MCF 10A (cell line): ENCODE measurements at regions of chr6 and their contacts with region 1.

Region 1: DNA sequence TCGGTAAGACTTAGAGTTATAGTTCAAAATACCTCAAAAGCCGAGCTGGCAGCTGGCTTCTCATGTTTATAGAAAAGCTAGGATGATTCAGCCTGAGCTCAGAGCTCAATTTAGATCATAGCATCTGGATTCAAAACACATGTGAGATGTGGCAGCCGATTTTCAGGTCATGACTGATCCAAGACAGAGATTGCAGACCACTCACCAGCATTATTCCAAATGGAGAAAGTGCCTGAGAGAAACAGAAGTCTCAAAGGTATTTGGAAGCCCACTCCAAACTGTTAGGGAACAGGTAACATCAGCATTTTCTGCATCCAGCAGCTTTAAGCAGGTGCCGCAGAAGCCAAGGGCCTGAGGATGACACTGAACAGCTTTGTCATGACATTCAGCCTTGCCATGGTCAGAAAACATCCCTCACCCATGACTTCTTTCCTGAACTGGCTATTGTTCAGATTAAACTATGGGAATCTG is 102.2 kb downstream of the BACH2 start:
- DNase-seq: peak; percentile 21
- H3K4me3 Mint-ChIP-seq: no peak overlapping the region
- H3K27ac Mint-ChIP-seq: no peak overlapping the region
- H3K4me1 Mint-ChIP-seq: peaks cover 15% of the 10 kb centered on the region
- H3K27me3 Mint-ChIP-seq: no peaks in the 10 kb centered on the region
- CTCF ChIP-seq: no peak

Region 2: DNA sequence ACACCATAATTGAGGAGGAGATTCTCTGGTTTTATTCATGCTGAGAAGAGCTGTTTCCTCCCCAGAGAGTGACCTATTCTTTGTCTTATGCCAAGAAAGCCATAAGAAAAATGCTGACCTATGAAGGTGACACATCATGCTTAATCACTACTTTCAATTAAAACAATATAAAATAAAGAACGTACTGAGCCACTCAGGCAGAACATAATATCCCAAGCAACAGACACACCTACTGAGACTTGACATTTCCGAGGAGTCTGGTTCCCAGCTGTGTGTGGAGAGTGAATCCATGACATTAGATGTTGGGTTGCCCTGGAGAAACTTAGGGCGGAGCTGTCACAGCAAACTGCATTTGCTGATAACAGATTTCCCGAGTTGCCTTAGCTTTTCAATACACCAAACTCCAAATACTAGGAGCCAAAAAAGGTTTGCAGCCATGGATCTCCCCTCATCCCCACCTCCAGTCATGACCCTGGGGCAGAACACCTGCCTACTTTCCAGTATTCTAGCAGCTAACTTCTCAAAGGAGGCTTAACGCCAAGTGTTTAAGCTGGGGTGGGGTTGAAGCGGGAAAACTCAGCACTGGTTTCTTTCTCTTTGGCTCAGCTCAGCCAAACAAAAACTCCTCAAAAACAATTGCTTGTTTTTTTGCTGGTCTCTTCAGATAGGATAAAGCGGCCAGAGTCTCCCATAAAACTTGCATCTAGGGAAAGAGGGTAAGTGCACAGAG is 10.1 kb after region 1 on chr6:
- CTCF ChIA-PET with region 1: no interaction called
- POLR2A ChIA-PET with region 1: interaction called, 12 read pairs
- intact Hi-C with region 1: no loop called
- DNase-seq: peak; percentile 20
- H3K4me3 Mint-ChIP-seq: no peak overlapping the region
- H3K27ac Mint-ChIP-seq: no peak overlapping the region
- H3K4me1 Mint-ChIP-seq: peaks cover 8% of the 10 kb centered on the region
- H3K27me3 Mint-ChIP-seq: no peaks in the 10 kb centered on the region
- CTCF ChIP-seq: no peak

Region 3: GRCh38 chr6:90226257-90226656 is 31.9 kb after region 1 on chr6:
- CTCF ChIA-PET with region 1: no interaction called
- POLR2A ChIA-PET with region 1: no interaction called
- intact Hi-C with region 1: no loop called
- DNase-seq: no peak
- H3K4me3 Mint-ChIP-seq: no peak overlapping the region
- H3K27ac Mint-ChIP-seq: no peak overlapping the region
- H3K4me1 Mint-ChIP-seq: peaks cover 14% of the 10 kb centered on the region
- H3K27me3 Mint-ChIP-seq: no peaks in the 10 kb centered on the region
- CTCF ChIP-seq: no peak